GM12878 (cell line): ENCODE measurements at regions of chr20 and their contacts with region 1.

Region 1: DNA sequence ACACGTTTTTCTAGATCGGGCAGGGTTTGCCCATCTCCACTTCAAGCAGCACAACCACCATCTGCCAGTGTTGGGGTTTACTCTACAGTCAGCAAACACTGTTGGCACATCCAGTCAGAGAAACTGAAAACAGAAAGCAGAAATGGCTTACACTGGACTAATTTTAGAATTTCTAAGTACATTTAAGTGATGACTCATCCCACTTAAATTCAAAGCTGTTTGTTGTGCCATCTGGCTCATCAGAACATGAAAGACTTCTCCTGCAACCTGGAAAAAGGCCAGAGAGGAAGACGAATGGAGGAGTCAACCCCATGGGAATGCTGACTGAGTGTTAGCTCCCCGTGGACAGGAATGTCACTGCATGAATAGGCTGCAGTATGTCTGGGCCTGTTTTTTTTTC is 21.8 kb downstream of the FAM209B start:
- DNase-seq: peak; percentile 83
- ATAC-seq: peak; percentile 92
- H3K4me3 ChIP-seq: no peak overlapping the region
- H3K27ac ChIP-seq: peak overlapping the region; percentile 17; the same call in 1 of the 2 replicates
- H3K4me1 ChIP-seq: peaks cover 16% of the 10 kb centered on the region
- H3K27me3 ChIP-seq: no peaks in the 10 kb centered on the region
- CTCF ChIP-seq: no peak
- EP300 ChIP-seq: 0 out of 4 replicates have a peak, but pooled peaks of 1 of the 2 experiments have one; percentile 44
- POLR2A ChIP-seq: no peak
- RAD21 ChIP-seq: no peak

Region 2: DNA sequence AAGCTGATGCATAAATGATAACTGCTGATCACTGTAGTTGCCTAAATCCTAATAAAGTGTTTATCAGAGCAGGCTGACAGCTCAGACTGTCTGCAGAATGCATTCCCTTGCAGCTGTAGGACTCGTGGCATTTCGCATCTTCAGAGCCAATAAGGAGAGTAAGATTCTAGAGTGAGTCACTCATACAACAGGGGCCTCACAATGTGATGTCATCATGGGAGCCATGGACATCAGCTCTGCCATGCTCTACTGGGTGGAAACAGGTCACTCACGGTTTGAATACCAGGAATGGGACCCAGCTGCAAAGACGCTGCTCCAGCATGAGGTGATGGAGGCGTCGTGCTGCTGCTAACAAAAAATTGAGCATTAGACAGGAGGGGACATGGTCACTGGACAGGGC is 14.4 kb before region 1 on chr20:
- CTCF ChIA-PET with region 1: interaction called, 13 read pairs
- POLR2A ChIA-PET with region 1: interaction called, 5 read pairs
- RAD21 ChIA-PET with region 1: interaction called, 3 read pairs
- SMC1A ChIA-PET with region 1: interaction called, 4 read pairs
- in situ Hi-C with region 1: no loop called
- intact Hi-C with region 1: no loop called
- DNase-seq: no peak
- ATAC-seq: no peak
- H3K4me3 ChIP-seq: no peak overlapping the region
- H3K27ac ChIP-seq: no peak overlapping the region
- H3K4me1 ChIP-seq: no peaks in the 10 kb centered on the region
- H3K27me3 ChIP-seq: no peaks in the 10 kb centered on the region
- CTCF ChIP-seq: no peak
- EP300 ChIP-seq: no peak
- POLR2A ChIP-seq: no peak
- RAD21 ChIP-seq: no peak

Region 3: DNA sequence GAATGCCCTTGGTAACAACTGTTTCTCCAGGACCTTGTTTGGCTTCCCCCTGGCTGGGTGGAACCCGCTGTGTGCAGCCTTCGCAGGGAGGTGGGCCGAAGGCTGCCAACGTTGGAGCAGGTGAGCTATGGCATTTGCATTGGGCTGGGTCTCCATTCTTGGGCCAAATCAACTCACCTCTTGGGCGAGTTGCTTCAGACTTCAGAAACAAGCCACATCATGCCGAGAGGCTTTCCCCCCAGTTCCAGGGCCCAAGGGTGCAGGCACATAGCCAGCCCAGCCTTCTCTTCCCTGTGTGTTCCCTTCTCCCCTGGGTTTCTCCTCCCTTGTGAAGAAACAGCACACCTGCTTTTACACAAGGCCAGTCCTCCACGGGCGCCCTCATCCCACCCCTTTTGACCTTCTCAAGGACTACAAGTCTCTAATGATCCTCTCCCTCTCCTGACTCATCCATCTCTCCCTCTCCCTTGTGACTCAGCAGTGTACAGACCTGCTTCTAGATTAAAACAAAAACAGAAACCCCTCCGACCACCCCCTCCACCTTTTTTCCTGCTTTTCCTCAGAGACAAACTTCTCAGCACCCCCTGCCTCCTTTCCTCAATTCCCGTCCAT is 19.8 kb after region 1 on chr20:
- CTCF ChIA-PET with region 1: interaction called, 83 read pairs
- POLR2A ChIA-PET with region 1: interaction called, 6 read pairs
- RAD21 ChIA-PET with region 1: interaction called, 17 read pairs
- SMC1A ChIA-PET with region 1: interaction called, 23 read pairs
- in situ Hi-C with region 1: no loop called
- intact Hi-C with region 1: loop called (anchors 1 kb)
- DNase-seq: no peak
- ATAC-seq: no peak
- H3K4me3 ChIP-seq: no peak overlapping the region
- H3K27ac ChIP-seq: no peak overlapping the region
- H3K4me1 ChIP-seq: no peaks in the 10 kb centered on the region
- H3K27me3 ChIP-seq: no peaks in the 10 kb centered on the region; a peak in 2 of 4 replicates
- CTCF ChIP-seq: no peak
- EP300 ChIP-seq: no peak
- POLR2A ChIP-seq: no peak
- RAD21 ChIP-seq: no peak

Region 4: GRCh38 chr20:56995576-56996075 is 440.8 kb after region 1 on chr20:
- CTCF ChIA-PET with region 1: interaction called, 39 read pairs
- POLR2A ChIA-PET with region 1: no interaction called
- RAD21 ChIA-PET with region 1: interaction called, 8 read pairs
- SMC1A ChIA-PET with region 1: interaction called, 4 read pairs
- in situ Hi-C with region 1: loop called (anchors 5 kb)
- intact Hi-C with region 1: loop called (anchors 2 kb)
- DNase-seq: no peak
- ATAC-seq: peak; percentile 72
- H3K4me3 ChIP-seq: no peak overlapping the region
- H3K27ac ChIP-seq: no peak overlapping the region
- H3K4me1 ChIP-seq: no peaks in the 10 kb centered on the region
- H3K27me3 ChIP-seq: peaks cover 0 to 2% of the 10 kb centered on the region in 2 experiments; a peak in 2 of 4 replicates
- CTCF ChIP-seq: peak; percentile 48 to 51 (median 51); a peak in 5 of 6 replicates
- EP300 ChIP-seq: no peak
- POLR2A ChIP-seq: no peak
- RAD21 ChIP-seq: peak; percentile 17; the same call in 1 of the 2 replicates

Region 5: GRCh38 chr20:57329608-57330221 is 774.8 kb after region 1 on chr20 and contains the start of gene SPO11:
- CTCF ChIA-PET with region 1: interaction called, 13 read pairs
- POLR2A ChIA-PET with region 1: no interaction called
- RAD21 ChIA-PET with region 1: no interaction called
- SMC1A ChIA-PET with region 1: no interaction called
- in situ Hi-C with region 1: no loop called
- intact Hi-C with region 1: no loop called
- DNase-seq: no peak
- ATAC-seq: peak; percentile 38; the same call in 2 of the 3 replicates
- H3K4me3 ChIP-seq: no peak within 1 kb of the TSS
- H3K27ac ChIP-seq: no peak within 1 kb of the TSS
- H3K4me1 ChIP-seq: no peaks in the 10 kb centered on the region
- H3K27me3 ChIP-seq: peaks cover 1 to 2% of the 10 kb centered on the region in 2 experiments; a peak in 2 of 4 replicates
- CTCF ChIP-seq: peak; percentile 20 to 34 (median 33); a peak in 4 of 6 replicates
- EP300 ChIP-seq: no peak
- POLR2A ChIP-seq: no peak
- RAD21 ChIP-seq: no peak
- polyA plus RNA-seq, gene SPO11: not detected